ENCODE measurements at regions of chr7 and their contacts with region 1.

Region 1: DNA sequence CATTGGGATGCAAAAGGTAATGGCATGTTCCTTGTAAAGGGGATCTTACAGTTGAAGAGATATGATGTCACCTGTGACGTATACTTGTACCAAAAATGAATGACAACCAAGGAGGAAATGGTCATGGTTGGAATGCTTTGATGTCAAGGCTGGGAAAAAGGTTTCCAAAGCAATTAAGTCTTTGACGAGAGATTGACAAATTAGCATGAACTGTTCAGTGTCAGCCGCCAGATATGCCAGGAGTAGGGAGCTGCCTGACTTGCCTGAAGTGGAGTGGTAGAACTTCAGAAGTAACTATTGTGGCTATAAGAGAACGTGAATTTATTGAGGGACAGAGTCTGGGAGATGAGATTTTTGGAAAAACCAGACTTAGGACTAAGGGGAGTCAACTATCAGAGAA is 88.1 kb downstream of the SEPTIN7 start:
- DNase-seq: no peak
- ATAC-seq: no peak

Region 2: GRCh38 chr7:35716038-35716803 is 172.8 kb before region 1 on chr7:
- intact Hi-C with region 1: loop called in 1 of 2 experiments (anchors 10 kb)
- DNase-seq: peak; percentile 34
- ATAC-seq: peak; percentile 78 to 81

Region 3: DNA sequence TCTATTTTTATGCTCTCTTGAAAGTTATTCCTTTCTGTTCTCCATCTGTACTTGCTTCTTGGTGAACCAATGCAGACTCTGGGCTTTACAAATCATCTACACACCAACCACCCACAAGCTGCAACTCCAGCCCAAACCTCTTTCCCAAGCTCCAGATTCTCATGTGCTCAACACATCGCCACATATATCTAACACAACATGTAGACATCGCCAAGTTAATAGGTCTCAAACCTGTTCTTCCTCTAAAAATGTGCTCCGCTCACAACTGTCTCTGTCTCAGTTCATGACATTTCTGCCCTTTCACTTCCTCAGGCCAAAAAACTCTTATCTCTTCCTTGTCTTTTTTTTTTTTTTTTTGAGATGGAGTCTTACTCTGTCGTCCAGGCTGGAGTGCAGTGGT is 168.3 kb after region 1 on chr7:
- intact Hi-C with region 1: no loop called
- DNase-seq: no peak
- ATAC-seq: no peak